Dorsolateral prefrontal cortex (tissue), 120 donors: ENCODE measurements at regions of chr4 and their contacts with region 1.

Region 1: DNA sequence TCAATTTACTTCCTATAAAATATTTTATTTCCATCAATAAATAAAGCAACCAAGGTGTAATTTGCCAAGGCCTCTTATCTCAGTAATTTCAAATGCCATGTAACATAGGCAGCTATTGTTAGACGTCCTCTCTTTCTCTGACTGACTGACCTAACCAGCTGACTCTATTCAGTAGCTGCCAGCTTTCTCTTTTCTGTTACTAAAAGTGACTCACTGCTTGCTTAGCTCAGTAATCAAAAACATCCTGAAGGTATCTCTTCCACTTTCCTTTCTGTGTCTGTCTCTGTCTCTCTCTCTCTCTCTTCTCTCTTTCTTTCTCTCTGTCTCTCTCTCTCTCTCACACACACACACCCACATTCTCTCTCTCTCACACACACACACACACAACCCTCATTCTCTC is 134.2 kb downstream of the SPOCK3 start:
- DNase-seq: no peak
- H3K4me3 ChIP-seq: peak overlapping the region in 27 of 59 donors; percentile 3 to 41 (median 23)
- H3K27ac ChIP-seq: peak overlapping the region in 58 of 59 donors; percentile 19 to 96 (median 86)
- H3K27me3 ChIP-seq: no peaks in the 10 kb centered on the region
- CTCF ChIP-seq: peak in 2 of 56 donors; percentile 2 to 7

Region 2: GRCh38 chr4:167000141-167000852 is 99.8 kb before region 1 on chr4:
- intact Hi-C with region 1: no loop called
- DNase-seq: no peak
- H3K4me3 ChIP-seq: no peak overlapping the region
- H3K27ac ChIP-seq: peak overlapping the region in 11 of 59 donors; percentile 6 to 95 (median 34)
- H3K27me3 ChIP-seq: no peaks in the 10 kb centered on the region
- CTCF ChIP-seq: no peak

Region 3: GRCh38 chr4:167222099-167222498 is 122.0 kb after region 1 on chr4:
- intact Hi-C with region 1: no loop called
- DNase-seq: no peak
- H3K4me3 ChIP-seq: no peak overlapping the region
- H3K27ac ChIP-seq: peak overlapping the region in 16 of 59 donors; percentile 1 to 73 (median 34)
- H3K27me3 ChIP-seq: no peaks in the 10 kb centered on the region
- CTCF ChIP-seq: no peak

Region 4: GRCh38 chr4:167234316-167234881 is 134.3 kb after region 1 on chr4 and contains the start of gene SPOCK3:
- intact Hi-C with region 1: loop called (anchors 2 to 5 kb)
- DNase-seq: peak; percentile 36 to 89 (median 82)
- H3K4me3 ChIP-seq: peak within 1 kb of the TSS; percentile 42 to 87 (median 73)
- H3K27ac ChIP-seq: peak within 1 kb of the TSS; percentile 69 to 97 (median 93)
- H3K27me3 ChIP-seq: peaks cover 0 to 30% (median 0%) of the 10 kb centered on the region in 45 donors
- CTCF ChIP-seq: peak in 6 of 56 donors; percentile 4 to 36 (median 18)
- total RNA-seq, gene SPOCK3: 36.8 to 343 (median 112) TPM